Mammary epithelial cell (primary cell): ENCODE measurements at regions of chr16 and their contacts with region 1.

Region 1: DNA sequence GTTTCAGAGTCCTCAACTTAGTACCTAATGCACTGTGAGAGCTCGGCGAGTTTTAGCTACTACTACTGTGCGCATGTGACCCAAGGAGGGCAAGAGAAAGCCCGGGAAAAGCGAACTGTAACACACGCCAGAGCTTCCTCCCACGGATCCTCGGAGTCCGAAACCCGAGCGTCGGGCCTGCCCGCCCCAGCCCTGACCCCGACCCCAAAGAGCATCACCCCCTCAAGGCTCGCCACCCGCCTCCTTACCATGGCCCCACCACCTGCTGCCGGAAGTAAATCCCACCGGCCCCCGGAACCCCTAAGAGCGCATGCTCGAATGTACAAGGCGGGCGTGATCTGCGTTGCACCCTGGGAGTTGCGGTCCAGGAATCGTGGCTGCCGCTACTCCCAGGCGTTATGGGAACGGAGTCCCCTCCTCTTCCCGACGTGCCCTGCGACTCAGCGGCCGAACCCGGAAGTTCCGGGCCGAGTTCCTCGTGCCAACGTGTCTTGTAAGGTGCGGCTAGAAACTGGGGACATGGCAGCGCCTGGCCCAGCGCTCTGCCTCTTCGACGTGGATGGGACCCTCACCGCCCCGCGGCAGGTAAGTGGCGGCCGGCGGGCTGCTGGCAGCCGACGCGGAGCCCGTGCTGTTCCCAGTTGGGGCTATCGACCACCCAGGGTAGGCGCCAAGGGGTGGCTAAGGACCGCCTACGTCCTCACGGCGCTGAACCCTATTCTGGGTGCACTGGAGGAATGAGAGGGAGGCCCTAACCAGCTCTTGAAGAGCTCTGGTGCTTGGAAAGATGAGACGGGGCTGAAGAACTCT is at the starts of genes PMM2 and TMEM186:
- DNase-seq: peak; percentile 95
- H3K4me3 ChIP-seq: peak within 1 kb of the TSS; percentile 78 to 95 (median 82)
- H3K27ac ChIP-seq: peak within 1 kb of the TSS; percentile 88
- H3K4me1 ChIP-seq: peaks cover 15% of the 10 kb centered on the region
- H3K27me3 ChIP-seq: no peaks in the 10 kb centered on the region
- CTCF ChIP-seq: no peak
- total RNA-seq, gene PMM2: 36.2 to 67.8 TPM
- total RNA-seq, gene TMEM186: 4.5 to 9.8 TPM

Region 2: DNA sequence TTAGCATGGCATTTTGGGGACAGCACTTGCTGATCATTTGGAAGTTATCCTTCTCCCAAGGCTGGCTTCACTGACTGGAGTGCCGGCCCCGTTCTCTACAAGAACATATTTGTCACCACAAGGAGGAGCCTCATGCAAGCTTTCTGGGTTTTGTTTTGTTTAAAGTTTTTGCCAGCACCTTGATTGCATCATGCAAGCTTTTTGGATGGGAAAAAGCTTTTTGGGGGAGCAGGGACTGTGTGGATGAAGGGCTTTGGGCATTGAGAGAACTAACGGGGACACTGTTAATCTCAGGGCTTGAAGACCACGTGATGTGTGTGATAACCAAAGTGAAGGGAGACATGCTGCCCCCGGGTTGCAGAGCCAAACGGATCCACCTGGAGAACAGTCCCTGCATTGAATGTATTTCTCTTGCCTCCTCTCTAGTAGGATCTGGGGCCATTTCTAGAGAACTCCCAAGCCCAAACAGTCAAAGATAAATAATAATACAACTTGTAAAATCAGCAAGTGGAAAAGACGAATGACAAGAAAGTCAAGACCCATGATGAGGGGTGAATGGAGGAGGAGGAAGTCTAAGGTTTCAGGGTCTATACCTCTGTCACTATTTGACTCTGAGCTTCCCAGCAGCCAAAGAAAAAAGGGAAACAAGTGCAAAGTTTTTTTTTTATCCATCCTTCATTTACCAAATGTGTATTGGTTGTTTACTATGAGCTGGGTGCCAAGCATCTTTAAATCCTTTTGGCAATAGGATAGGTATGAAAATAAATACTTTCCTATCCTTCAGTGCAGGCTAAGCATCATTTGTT is 224.4 kb before region 1 on chr16:
- CTCF ChIA-PET with region 1: no interaction called
- dilution Hi-C with region 1: no loop called
- in situ Hi-C with region 1: loop called (anchors 5 kb)
- intact Hi-C with region 1: loop called (anchors 1 kb)
- DNase-seq: peak; percentile 24
- H3K4me3 ChIP-seq: no peak overlapping the region
- H3K27ac ChIP-seq: no peak overlapping the region
- H3K4me1 ChIP-seq: no peaks in the 10 kb centered on the region
- H3K27me3 ChIP-seq: no peaks in the 10 kb centered on the region
- CTCF ChIP-seq: peak; percentile 33 to 67

Region 3: GRCh38 chr16:8660841-8661301 is 136.7 kb before region 1 on chr16:
- CTCF ChIA-PET with region 1: no interaction called
- dilution Hi-C with region 1: no loop called
- in situ Hi-C with region 1: loop called (anchors 5 kb)
- intact Hi-C with region 1: loop called (anchors 1 kb)
- DNase-seq: peak; percentile 65
- H3K4me3 ChIP-seq: peak overlapping the region in 1 of 3 experiments; percentile 19
- H3K27ac ChIP-seq: no peak overlapping the region
- H3K4me1 ChIP-seq: no peaks in the 10 kb centered on the region
- H3K27me3 ChIP-seq: no peaks in the 10 kb centered on the region
- CTCF ChIP-seq: peak; percentile 54 to 84

Region 4: DNA sequence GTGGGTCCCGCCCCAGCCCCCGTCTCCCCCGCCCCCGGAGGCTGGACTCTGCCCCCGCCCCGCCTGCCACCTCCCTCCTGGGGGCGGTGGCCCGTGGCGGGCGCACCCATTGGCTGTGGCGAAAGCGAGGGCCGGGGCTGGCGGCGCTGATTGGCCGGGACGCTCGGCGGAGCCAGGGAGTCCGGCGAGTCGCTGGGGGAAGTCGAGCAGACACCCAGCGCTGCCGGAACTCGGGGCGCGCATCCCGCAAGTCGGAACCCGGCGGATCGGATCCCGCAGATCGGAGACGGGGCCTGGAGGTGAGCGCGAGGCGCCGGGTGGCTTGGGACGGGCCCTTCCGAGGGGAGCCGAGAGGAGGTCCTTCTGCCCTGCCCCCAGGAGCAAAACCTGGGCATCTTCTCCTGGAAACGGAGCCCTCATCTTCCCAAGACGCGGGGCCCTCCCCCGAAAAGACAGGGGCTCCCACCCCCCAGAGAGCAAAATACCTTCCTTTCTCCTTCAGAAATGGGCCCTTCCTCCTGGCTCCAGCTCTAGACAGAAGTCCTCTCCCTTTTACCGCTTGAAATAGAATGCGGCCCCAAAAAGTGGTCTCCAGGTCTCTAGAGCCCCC is 123.1 kb before region 1 on chr16 and contains the start of gene ABAT:
- CTCF ChIA-PET with region 1: no interaction called
- dilution Hi-C with region 1: no loop called
- in situ Hi-C with region 1: no loop called
- intact Hi-C with region 1: loop called (anchors 2 kb)
- DNase-seq: peak; percentile 86
- H3K4me3 ChIP-seq: peak within 1 kb of the TSS; percentile 69 to 87 (median 81)
- H3K27ac ChIP-seq: peak within 1 kb of the TSS; percentile 32
- H3K4me1 ChIP-seq: peaks cover 41% of the 10 kb centered on the region
- H3K27me3 ChIP-seq: no peaks in the 10 kb centered on the region
- CTCF ChIP-seq: no peak
- total RNA-seq, gene ABAT: 13.6 to 20.5 TPM

Region 5: GRCh38 chr16:8776129-8776584 is 21.4 kb before region 1 on chr16:
- CTCF ChIA-PET with region 1: no interaction called
- dilution Hi-C with region 1: no loop called
- in situ Hi-C with region 1: no loop called
- intact Hi-C with region 1: no loop called
- DNase-seq: no peak
- H3K4me3 ChIP-seq: no peak overlapping the region
- H3K27ac ChIP-seq: no peak overlapping the region
- H3K4me1 ChIP-seq: no peaks in the 10 kb centered on the region
- H3K27me3 ChIP-seq: no peaks in the 10 kb centered on the region
- CTCF ChIP-seq: no peak

Region 6: GRCh38 chr16:8878521-8878911 is 80.9 kb after region 1 on chr16:
- CTCF ChIA-PET with region 1: no interaction called
- dilution Hi-C with region 1: no loop called
- in situ Hi-C with region 1: no loop called
- intact Hi-C with region 1: loop called (anchors 1 kb)
- DNase-seq: peak; percentile 72
- H3K4me3 ChIP-seq: no peak overlapping the region
- H3K27ac ChIP-seq: peak overlapping the region; percentile 34
- H3K4me1 ChIP-seq: peaks cover 15% of the 10 kb centered on the region
- H3K27me3 ChIP-seq: no peaks in the 10 kb centered on the region
- CTCF ChIP-seq: no peak

Region 7: DNA sequence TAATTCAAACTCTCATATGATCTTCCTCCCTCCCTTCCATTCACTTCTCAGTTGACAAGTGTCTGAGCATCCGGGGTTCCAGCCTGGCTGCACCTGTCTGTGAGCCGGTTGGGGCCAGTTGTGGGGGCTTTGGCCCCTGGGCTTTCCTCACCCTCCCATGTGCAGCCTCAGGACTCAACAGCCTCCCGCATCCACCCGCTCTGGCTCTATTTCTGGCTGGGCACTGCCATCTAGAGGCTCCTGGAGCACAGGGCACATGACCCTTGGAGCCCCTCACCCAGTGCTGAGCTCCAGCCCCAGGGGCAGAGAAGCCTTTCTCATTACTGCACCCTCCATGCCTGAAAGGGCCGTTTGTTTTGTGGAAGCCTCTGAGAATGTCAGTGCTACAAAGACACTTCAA is 337.2 kb after region 1 on chr16:
- CTCF ChIA-PET with region 1: no interaction called
- dilution Hi-C with region 1: no loop called
- in situ Hi-C with region 1: no loop called
- intact Hi-C with region 1: loop called (anchors 10 kb)
- DNase-seq: no peak
- H3K4me3 ChIP-seq: no peak overlapping the region
- H3K27ac ChIP-seq: no peak overlapping the region
- H3K4me1 ChIP-seq: peaks cover 3% of the 10 kb centered on the region
- H3K27me3 ChIP-seq: no peaks in the 10 kb centered on the region
- CTCF ChIP-seq: peak; percentile 42 to 70